WTC11 (cell line): ENCODE measurements at regions of chr1 and their contacts with region 1.

Region 1: DNA sequence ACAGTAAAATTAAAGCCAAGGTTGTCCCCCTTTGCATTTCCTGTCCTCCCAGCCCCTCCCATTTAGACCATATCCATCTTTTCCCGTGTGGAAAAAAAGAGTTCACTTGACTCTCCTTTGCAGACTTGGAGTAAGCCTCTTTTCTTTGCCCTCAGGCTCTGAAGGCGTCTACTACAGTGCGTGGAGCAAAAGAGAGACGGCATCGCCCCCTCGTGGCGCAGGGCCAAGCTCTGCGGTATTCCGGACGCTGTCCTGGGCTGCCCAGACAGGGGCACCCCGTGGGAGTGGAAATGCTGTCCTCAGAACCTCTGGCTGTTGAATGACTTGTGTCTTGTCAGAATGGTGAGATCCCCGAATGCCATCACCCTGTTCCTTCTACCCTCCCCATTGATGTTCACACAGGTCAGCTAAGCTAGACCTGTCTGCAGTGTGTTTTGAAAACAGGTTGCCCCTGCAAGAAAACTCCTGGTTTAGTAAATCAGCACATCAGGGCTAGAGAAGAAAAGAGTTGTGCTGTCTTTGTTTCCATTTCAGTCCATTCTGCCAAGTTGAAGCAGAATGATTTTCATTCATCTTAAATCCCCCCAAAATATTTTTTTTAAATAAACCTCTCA is 12.3 kb upstream of the GJA8 start:
- DNase-seq: peak; percentile 92
- ATAC-seq: peak; percentile 96
- H3K4me3 Mint-ChIP-seq: no peak overlapping the region
- H3K27ac Mint-ChIP-seq: no peak overlapping the region
- H3K4me1 Mint-ChIP-seq: peaks cover 21% of the 10 kb centered on the region
- H3K27me3 Mint-ChIP-seq: no peaks in the 10 kb centered on the region; the same call in 1 of the 2 replicates
- CTCF ChIP-seq: peak; percentile 68; the same call in 1 of the 2 replicates

Region 2: GRCh38 chr1:147351140-147351835 is 539.0 kb before region 1 on chr1:
- CTCF ChIA-PET with region 1: no interaction called
- POLR2A ChIA-PET with region 1: no interaction called
- DNase-seq: no peak
- ATAC-seq: no peak
- H3K4me3 Mint-ChIP-seq: no peak overlapping the region
- H3K27ac Mint-ChIP-seq: no peak overlapping the region
- H3K4me1 Mint-ChIP-seq: no peaks in the 10 kb centered on the region
- H3K27me3 Mint-ChIP-seq: peaks cover 1% of the 10 kb centered on the region
- CTCF ChIP-seq: no peak

Region 3: GRCh38 chr1:147567594-147568381 is 322.5 kb before region 1 on chr1:
- CTCF ChIA-PET with region 1: no interaction called
- POLR2A ChIA-PET with region 1: no interaction called
- DNase-seq: no peak
- ATAC-seq: peak; percentile 95
- H3K4me3 Mint-ChIP-seq: peak overlapping the region; percentile 66
- H3K27ac Mint-ChIP-seq: peak overlapping the region; percentile 99
- H3K4me1 Mint-ChIP-seq: peaks cover 78% of the 10 kb centered on the region
- H3K27me3 Mint-ChIP-seq: no peaks in the 10 kb centered on the region
- CTCF ChIP-seq: no peak

Region 4: GRCh38 chr1:147627435-147628110 is 262.7 kb before region 1 on chr1:
- CTCF ChIA-PET with region 1: interaction called, 12 read pairs
- POLR2A ChIA-PET with region 1: no interaction called
- DNase-seq: peak; percentile 60
- ATAC-seq: peak; percentile 81
- H3K4me3 Mint-ChIP-seq: no peak overlapping the region
- H3K27ac Mint-ChIP-seq: no peak overlapping the region
- H3K4me1 Mint-ChIP-seq: peaks cover 25% of the 10 kb centered on the region
- H3K27me3 Mint-ChIP-seq: no peaks in the 10 kb centered on the region
- CTCF ChIP-seq: peak; percentile 89

Region 5: GRCh38 chr1:147670317-147671041 is 219.8 kb before region 1 on chr1 and contains the start of gene ACP6:
- CTCF ChIA-PET with region 1: interaction called, 30 read pairs
- POLR2A ChIA-PET with region 1: interaction called, 3 read pairs
- DNase-seq: peak; percentile 96
- ATAC-seq: peak; percentile 97
- H3K4me3 Mint-ChIP-seq: peak within 1 kb of the TSS; percentile 83
- H3K27ac Mint-ChIP-seq: peak within 1 kb of the TSS; percentile 13; the same call in 1 of the 2 replicates
- H3K4me1 Mint-ChIP-seq: peaks cover 31% of the 10 kb centered on the region
- H3K27me3 Mint-ChIP-seq: no peaks in the 10 kb centered on the region
- CTCF ChIP-seq: no peak
- total RNA-seq, gene ACP6: 31.5 to 35.6 TPM (median 33.3 TPM) in 3 replicates

Region 6: DNA sequence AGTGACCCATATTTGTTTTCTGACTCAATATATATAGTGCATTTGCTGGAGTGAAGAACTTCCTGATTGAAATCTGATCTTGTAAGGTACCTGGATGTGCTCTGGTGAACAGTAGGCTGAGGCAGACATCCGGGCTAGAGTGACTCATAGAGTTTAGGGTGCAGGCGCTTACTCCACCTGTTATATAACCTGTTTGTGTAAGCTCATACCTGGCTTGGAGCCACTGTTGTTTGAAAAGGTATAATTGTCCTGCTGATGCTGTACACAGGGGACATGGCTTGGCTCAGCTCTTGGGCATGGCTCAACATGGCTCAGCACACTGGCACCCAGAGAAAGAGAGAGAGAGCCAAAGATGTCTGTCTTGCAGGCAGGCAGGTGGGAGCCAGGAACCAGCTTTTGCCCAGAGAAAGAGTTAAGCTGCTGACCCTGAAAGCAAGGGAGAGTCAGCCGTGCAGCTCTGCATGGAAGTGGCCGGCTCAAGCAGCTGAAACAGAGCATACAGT is 173.2 kb before region 1 on chr1:
- CTCF ChIA-PET with region 1: interaction called, 143 read pairs
- POLR2A ChIA-PET with region 1: interaction called, 4 read pairs
- DNase-seq: no peak
- ATAC-seq: no peak
- H3K4me3 Mint-ChIP-seq: no peak overlapping the region
- H3K27ac Mint-ChIP-seq: no peak overlapping the region
- H3K4me1 Mint-ChIP-seq: peaks cover 11% of the 10 kb centered on the region
- H3K27me3 Mint-ChIP-seq: no peaks in the 10 kb centered on the region
- CTCF ChIP-seq: no peak

Region 7: DNA sequence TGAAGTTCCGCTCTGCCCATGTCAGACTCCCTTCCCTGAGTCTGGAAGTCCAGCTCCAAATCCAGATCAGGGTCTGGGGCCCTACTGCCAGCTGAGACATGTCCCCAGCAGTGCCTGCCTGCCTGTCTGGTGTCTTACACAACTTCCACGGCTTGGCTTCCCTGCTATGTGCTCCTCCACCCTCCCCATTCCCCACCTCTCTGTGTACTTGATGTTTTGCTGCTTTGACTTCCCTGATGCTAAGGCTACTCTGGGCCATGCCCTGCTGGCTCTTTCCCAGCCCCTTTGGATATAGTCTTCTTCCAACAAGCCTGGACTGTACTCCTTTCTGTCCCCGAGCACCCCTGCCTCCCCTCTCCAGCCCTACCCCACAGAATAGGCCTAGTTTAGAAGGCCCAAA is 137.2 kb before region 1 on chr1:
- CTCF ChIA-PET with region 1: interaction called, 10 read pairs
- POLR2A ChIA-PET with region 1: no interaction called
- DNase-seq: no peak
- ATAC-seq: no peak
- H3K4me3 Mint-ChIP-seq: no peak overlapping the region
- H3K27ac Mint-ChIP-seq: no peak overlapping the region
- H3K4me1 Mint-ChIP-seq: peaks cover 3% of the 10 kb centered on the region
- H3K27me3 Mint-ChIP-seq: no peaks in the 10 kb centered on the region
- CTCF ChIP-seq: no peak

Region 8: DNA sequence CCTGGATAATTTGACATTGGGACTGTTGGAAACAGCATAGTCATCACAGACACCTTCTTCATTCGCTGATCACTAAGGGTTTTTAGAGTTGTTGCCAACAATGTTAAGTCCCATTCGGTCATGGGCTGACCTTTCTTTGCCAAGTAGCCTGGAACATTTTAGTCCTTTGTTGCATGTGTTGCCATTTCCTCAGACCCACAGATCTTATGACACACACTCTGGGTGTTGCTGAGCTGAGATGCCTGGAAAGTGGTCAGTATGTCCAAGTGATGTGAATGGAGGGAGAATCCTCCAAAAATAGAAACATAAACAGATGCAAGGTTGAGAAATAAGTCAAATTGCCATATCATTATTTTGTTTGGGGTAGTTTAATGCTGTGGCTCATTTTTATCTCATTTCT is 68.4 kb before region 1 on chr1:
- CTCF ChIA-PET with region 1: no interaction called
- POLR2A ChIA-PET with region 1: no interaction called
- DNase-seq: no peak
- ATAC-seq: no peak
- H3K4me3 Mint-ChIP-seq: no peak overlapping the region
- H3K27ac Mint-ChIP-seq: no peak overlapping the region
- H3K4me1 Mint-ChIP-seq: peaks cover 2% of the 10 kb centered on the region; the same call in 1 of the 2 replicates
- H3K27me3 Mint-ChIP-seq: no peaks in the 10 kb centered on the region
- CTCF ChIP-seq: no peak

Region 9: GRCh38 chr1:147853391-147853790 is 36.9 kb before region 1 on chr1:
- CTCF ChIA-PET with region 1: interaction called, 11 read pairs
- POLR2A ChIA-PET with region 1: no interaction called
- DNase-seq: no peak
- ATAC-seq: peak; percentile 65
- H3K4me3 Mint-ChIP-seq: no peak overlapping the region
- H3K27ac Mint-ChIP-seq: peak overlapping the region; percentile 39
- H3K4me1 Mint-ChIP-seq: peaks cover 33% of the 10 kb centered on the region
- H3K27me3 Mint-ChIP-seq: peaks cover 9% of the 10 kb centered on the region
- CTCF ChIP-seq: no peak

Region 10: GRCh38 chr1:147902183-147902845 is 12.0 kb after region 1 on chr1 and contains the start of gene GJA8:
- CTCF ChIA-PET with region 1: interaction called, 36 read pairs
- POLR2A ChIA-PET with region 1: no interaction called
- DNase-seq: no peak
- ATAC-seq: no peak
- H3K4me3 Mint-ChIP-seq: no peak within 1 kb of the TSS
- H3K27ac Mint-ChIP-seq: no peak within 1 kb of the TSS
- H3K4me1 Mint-ChIP-seq: no peaks in the 10 kb centered on the region
- H3K27me3 Mint-ChIP-seq: peaks cover 5% of the 10 kb centered on the region; the same call in 1 of the 2 replicates
- CTCF ChIP-seq: no peak
- total RNA-seq, gene GJA8: not detected in 3 replicates